Calu3 (cell line): ENCODE measurements at regions of chr13 and their contacts with region 1.

Region 1: DNA sequence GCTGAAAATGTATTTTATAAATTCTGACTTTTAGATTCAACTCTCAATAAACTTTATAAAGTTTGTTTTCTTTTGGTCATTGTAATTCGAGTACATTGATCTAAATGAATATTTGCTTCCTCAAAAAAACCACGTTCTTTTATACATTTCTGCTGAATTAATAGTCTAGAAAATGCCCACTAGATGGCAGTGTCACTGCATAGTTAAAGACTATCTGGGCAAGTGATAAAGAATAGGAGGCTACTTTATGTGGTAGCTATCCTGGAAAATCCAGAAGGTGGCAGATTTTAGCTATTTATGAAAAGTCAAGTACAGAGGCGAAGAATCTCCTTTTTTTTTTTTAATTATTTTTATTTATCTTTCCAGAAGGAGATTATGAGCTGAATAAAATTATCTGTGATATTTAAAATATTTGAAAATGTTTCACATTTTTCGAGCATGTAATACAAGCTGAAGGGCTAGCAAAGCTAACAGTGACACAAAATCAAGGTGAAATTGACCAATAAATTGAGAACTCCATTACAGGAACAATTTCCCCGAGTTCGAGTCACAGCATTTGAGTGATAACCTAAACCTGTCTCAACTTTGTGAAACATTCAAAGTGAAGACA is 221.8 kb downstream of the OLFM4 start:
- DNase-seq: peak; percentile 44
- H3K4me3 Mint-ChIP-seq: no peak overlapping the region
- H3K27ac Mint-ChIP-seq: no peak overlapping the region
- H3K4me1 Mint-ChIP-seq: no peaks in the 10 kb centered on the region
- H3K27me3 Mint-ChIP-seq: peaks cover 34% of the 10 kb centered on the region
- CTCF ChIP-seq: no peak

Region 2: GRCh38 chr13:53782488-53782961 is 532.2 kb after region 1 on chr13:
- CTCF ChIA-PET with region 1: interaction called, 9 read pairs
- intact Hi-C with region 1: loop called (anchors 2 kb)
- DNase-seq: peak; percentile 19
- H3K4me3 Mint-ChIP-seq: no peak overlapping the region
- H3K27ac Mint-ChIP-seq: no peak overlapping the region
- H3K4me1 Mint-ChIP-seq: no peaks in the 10 kb centered on the region
- H3K27me3 Mint-ChIP-seq: no peaks in the 10 kb centered on the region
- CTCF ChIP-seq: peak; percentile 64